Heart right ventricle (tissue), 16 donors: ENCODE measurements at regions of chr9 and their contacts with region 1.

Region 1: DNA sequence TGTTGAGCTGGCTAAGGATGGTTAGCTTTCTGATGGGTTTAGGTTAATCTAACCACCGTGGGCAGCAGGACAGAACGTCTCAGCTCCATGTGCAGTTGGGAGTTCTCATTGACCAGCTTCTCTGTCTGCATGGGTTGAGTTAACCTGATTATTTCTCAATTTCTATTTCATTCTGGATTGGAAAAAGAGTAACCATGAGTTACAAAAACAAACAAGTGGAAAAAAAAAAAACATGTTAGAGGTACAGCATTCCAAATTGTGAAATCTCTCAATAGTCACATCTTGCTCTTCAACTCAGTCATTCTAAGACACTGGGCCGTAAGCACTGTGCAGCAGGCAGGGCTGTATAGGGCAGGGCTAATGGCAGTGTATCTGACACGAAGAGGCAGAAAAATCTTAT is 343.7 kb upstream of the KLF4 start:
- DNase-seq: no peak
- ATAC-seq: no peak
- H3K4me3 ChIP-seq: no peak overlapping the region
- H3K27ac ChIP-seq: no peak overlapping the region
- H3K4me1 ChIP-seq: no peaks in the 10 kb centered on the region
- H3K27me3 ChIP-seq: no peaks in the 10 kb centered on the region
- CTCF ChIP-seq: no peak

Region 2: GRCh38 chr9:107874591-107875369 is 41.5 kb after region 1 on chr9:
- intact Hi-C with region 1: loop called in 1 of 10 experiments (anchors 5 kb)
- DNase-seq: no peak
- ATAC-seq: peak in 3 of 8 donors; percentile 51 to 74 (median 58)
- H3K4me3 ChIP-seq: no peak overlapping the region
- H3K27ac ChIP-seq: peak overlapping the region in 1 of 10 donors; percentile 41
- H3K4me1 ChIP-seq: peaks cover 0 to 21% (median 0%) of the 10 kb centered on the region in 9 donors
- H3K27me3 ChIP-seq: peaks cover 0 to 8% (median 0%) of the 10 kb centered on the region in 7 donors
- CTCF ChIP-seq: no peak

Region 3: DNA sequence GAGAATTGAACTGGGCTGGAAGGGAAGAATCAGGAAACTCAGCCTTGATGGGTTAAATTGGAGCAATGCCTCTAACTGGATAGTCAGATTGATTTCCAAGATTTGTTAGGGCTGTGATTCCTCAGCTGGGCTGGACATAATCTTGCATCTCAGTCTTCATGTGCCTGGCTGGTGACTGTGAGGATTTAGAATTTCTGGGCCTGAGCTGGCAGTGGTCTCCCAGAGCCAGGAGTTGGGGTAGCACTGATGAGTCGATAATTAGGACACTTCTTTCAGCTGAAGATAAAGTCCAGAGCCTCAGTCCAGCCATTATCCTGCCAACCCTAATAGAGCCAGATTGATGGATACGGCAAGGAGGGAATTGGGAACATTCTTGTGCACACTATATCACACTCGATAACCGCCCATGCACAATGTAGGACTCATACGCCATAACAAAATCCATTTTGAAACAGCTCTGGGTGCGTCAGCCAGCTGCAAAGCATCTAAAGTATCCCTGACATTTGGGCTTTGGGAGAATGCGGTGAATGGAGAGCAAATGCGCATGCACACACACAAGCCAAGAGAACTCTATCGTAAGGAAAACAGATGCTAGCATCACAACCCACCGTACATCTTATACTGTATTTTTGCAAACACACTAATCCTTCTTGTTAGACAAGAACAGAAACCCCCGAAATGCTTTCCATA is 61.4 kb after region 1 on chr9:
- intact Hi-C with region 1: no loop called
- DNase-seq: no peak
- ATAC-seq: peak in 1 of 8 donors; percentile 45
- H3K4me3 ChIP-seq: no peak overlapping the region
- H3K27ac ChIP-seq: no peak overlapping the region
- H3K4me1 ChIP-seq: no peaks in the 10 kb centered on the region
- H3K27me3 ChIP-seq: no peaks in the 10 kb centered on the region
- CTCF ChIP-seq: no peak

Region 4: DNA sequence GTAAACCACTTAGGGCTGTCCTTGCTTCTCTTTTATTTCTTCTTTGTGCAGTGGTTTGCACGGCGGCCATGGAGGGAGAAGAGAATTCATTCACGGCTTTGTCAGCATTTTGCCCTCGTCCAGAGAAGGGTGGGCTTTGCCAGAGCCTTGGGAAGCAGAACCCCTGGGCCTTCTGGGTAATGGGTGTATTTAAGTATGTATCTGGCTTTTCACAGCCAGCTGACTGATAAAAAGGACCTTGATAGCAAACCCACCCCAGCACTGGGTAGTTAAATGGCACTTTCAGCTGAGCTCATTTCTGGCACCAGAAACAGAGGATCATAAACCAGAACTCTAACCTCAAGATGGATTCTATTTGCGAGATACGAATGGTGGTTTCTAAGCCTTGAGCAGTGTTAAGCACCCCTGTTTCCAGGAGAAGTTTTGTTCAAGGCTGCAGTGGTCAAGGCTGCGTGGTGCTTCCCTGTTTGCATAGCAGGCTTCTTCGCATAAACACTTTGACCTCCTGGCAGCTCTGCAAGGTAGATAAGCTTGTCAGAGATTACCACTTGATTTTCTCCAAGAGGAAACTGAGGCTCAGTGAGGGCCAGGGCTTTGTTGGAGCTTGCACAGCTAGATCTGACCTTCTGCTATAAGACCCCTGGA is 97.9 kb after region 1 on chr9:
- intact Hi-C with region 1: loop called in 1 of 10 experiments (anchors 1 kb)
- DNase-seq: no peak
- ATAC-seq: no peak
- H3K4me3 ChIP-seq: no peak overlapping the region
- H3K27ac ChIP-seq: no peak overlapping the region
- H3K4me1 ChIP-seq: peaks cover 0 to 24% (median 0%) of the 10 kb centered on the region in 9 donors
- H3K27me3 ChIP-seq: peaks cover 0 to 9% (median 0%) of the 10 kb centered on the region in 7 donors
- CTCF ChIP-seq: no peak

Region 5: GRCh38 chr9:108093773-108094675 is 260.7 kb after region 1 on chr9:
- intact Hi-C with region 1: loop called in 1 of 10 experiments (anchors 10 kb)
- DNase-seq: no peak
- ATAC-seq: no peak
- H3K4me3 ChIP-seq: no peak overlapping the region
- H3K27ac ChIP-seq: no peak overlapping the region
- H3K4me1 ChIP-seq: no peaks in the 10 kb centered on the region
- H3K27me3 ChIP-seq: no peaks in the 10 kb centered on the region
- CTCF ChIP-seq: no peak